ENCODE measurements at regions of chr12 and their contacts with region 1.

Region 1: GRCh38 chr12:4857472-4858291 is 52.0 kb upstream of the KCNA1 start:
- DNase-seq: peak; percentile 64
- ATAC-seq: peak; percentile 90
- H3K4me3 Mint-ChIP-seq: peak overlapping the region; percentile 73
- H3K27ac Mint-ChIP-seq: no peak overlapping the region
- H3K4me1 Mint-ChIP-seq: peaks cover 17% of the 10 kb centered on the region
- H3K27me3 Mint-ChIP-seq: peaks cover 35% of the 10 kb centered on the region
- CTCF ChIP-seq: no peak

Region 2: GRCh38 chr12:3998968-3999826 is 858.5 kb before region 1 on chr12:
- CTCF ChIA-PET with region 1: no interaction called
- POLR2A ChIA-PET with region 1: no interaction called
- intact Hi-C with region 1: no loop called
- DNase-seq: no peak
- ATAC-seq: no peak
- H3K4me3 Mint-ChIP-seq: no peak overlapping the region
- H3K27ac Mint-ChIP-seq: no peak overlapping the region
- H3K4me1 Mint-ChIP-seq: peaks cover 4% of the 10 kb centered on the region
- H3K27me3 Mint-ChIP-seq: peaks cover 6% of the 10 kb centered on the region
- CTCF ChIP-seq: no peak

Region 3: DNA sequence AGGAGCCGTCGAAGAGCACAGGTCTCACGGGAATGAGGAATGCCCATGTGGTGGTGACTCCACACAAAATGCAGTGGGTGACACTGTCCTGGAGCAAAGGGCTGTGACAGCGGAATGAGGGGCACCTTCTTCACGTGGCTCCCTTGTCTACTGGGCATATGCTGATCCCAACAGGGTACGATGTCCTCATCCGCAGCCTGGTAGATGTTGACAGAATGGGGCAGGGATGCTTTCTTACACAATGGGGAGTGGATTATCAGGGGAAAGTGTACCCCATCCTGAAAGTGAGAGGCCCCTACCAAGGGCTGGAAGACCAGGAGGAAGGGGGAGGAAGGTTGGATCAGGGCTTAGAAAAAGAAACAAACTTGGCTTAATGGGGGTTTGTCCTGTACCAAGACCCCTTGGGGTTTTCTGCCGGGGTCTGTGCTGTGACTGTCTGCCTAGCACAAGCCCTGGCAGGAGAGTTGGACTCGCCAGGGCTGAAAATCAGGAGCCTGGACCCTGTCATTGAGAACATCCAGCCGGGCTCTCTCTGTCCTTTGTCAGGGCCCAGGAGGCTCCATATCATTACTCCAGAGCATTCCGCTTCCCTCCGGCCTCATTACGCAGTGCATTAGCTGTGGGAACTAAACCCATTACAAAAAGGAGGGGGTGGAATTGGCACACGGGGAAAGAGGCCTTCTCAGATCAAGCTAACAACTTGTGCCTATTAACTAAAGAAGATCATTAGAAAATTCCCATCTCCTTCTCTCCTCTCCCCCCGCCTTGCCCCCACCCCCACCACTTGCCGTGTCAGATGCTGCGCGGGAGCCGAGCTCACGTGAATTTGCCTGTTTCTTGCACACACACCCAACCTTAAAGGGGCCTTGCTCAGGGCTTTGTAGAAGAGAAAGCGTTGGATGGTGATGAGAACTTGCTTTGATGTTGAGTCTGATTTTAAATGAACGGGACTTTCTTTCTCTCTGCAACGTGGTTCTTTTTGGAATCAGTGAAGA is 812.6 kb before region 1 on chr12:
- CTCF ChIA-PET with region 1: no interaction called
- POLR2A ChIA-PET with region 1: no interaction called
- intact Hi-C with region 1: no loop called
- DNase-seq: no peak
- ATAC-seq: no peak
- H3K4me3 Mint-ChIP-seq: no peak overlapping the region
- H3K27ac Mint-ChIP-seq: no peak overlapping the region
- H3K4me1 Mint-ChIP-seq: no peaks in the 10 kb centered on the region
- H3K27me3 Mint-ChIP-seq: peaks cover 14% of the 10 kb centered on the region
- CTCF ChIP-seq: no peak

Region 4: GRCh38 chr12:4829161-4829792 is 28.4 kb before region 1 on chr12:
- CTCF ChIA-PET with region 1: interaction called, 14 read pairs
- POLR2A ChIA-PET with region 1: no interaction called
- intact Hi-C with region 1: loop called (anchors 1 kb)
- DNase-seq: no peak
- ATAC-seq: peak; percentile 87
- H3K4me3 Mint-ChIP-seq: peak overlapping the region; percentile 76
- H3K27ac Mint-ChIP-seq: peak overlapping the region; percentile 93
- H3K4me1 Mint-ChIP-seq: peaks cover 87% of the 10 kb centered on the region
- H3K27me3 Mint-ChIP-seq: no peaks in the 10 kb centered on the region
- CTCF ChIP-seq: no peak

Region 5: DNA sequence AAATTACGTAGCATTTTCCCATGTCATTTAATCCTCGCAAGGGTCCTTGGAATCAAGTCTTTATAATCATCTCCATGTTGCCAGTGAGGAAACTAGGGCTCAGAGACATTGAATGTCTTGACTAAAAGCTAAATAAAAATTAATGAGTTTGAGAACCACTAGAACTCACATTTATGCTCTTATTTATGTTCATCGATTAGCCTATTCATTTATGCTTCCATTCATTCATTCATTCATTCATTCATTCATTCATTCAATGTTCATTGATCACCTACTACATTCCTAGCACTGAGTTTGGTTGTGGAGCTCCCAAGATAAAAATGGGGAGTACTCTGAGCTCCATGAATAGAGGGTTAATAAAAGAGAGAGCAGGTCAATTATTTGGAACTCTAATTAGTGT is 111.7 kb after region 1 on chr12:
- CTCF ChIA-PET with region 1: no interaction called
- POLR2A ChIA-PET with region 1: no interaction called
- intact Hi-C with region 1: no loop called
- DNase-seq: no peak
- ATAC-seq: no peak
- H3K4me3 Mint-ChIP-seq: no peak overlapping the region
- H3K27ac Mint-ChIP-seq: no peak overlapping the region
- H3K4me1 Mint-ChIP-seq: no peaks in the 10 kb centered on the region
- H3K27me3 Mint-ChIP-seq: peaks cover 28% of the 10 kb centered on the region
- CTCF ChIP-seq: no peak

Region 6: DNA sequence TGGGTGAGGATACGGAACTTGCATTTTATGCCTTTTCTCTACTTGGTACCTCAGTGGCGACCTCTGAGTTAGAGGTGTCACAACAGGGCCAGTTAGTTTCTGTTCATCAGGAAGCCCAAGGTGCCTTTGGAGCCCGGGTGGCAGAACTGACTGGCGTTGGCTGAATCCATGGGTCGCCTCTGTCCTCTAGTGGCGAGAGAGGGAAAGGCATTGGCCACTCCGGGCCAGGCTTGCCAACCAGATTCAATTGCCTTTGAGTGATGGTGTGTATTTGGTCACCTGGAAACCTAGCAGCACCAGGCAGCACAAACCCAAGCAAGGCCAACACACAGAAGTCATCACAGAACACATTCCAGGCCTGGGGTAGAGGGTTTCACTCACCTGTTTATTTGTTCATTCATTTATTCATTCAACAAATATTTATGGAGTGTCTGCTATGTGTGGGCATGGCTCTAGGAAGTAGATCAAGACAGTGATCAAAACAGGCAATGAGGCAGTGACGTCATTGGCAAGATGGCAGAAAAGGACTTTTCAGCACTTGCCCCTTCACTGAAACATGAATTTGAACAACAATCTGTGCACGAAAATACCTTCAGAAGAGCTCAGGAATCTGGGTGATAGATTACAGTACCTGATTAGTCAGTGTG is 145.5 kb after region 1 on chr12:
- CTCF ChIA-PET with region 1: interaction called, 21 read pairs
- POLR2A ChIA-PET with region 1: no interaction called
- intact Hi-C with region 1: loop called (anchors 1 kb)
- DNase-seq: peak; percentile 36
- ATAC-seq: peak; percentile 83
- H3K4me3 Mint-ChIP-seq: no peak overlapping the region
- H3K27ac Mint-ChIP-seq: no peak overlapping the region
- H3K4me1 Mint-ChIP-seq: no peaks in the 10 kb centered on the region
- H3K27me3 Mint-ChIP-seq: peaks cover 15% of the 10 kb centered on the region
- CTCF ChIP-seq: peak; percentile 56

Region 7: GRCh38 chr12:5083955-5084849 is 226.5 kb after region 1 on chr12:
- CTCF ChIA-PET with region 1: interaction called, 20 read pairs
- POLR2A ChIA-PET with region 1: no interaction called
- intact Hi-C with region 1: loop called (anchors 1 kb)
- DNase-seq: no peak
- ATAC-seq: peak; percentile 57
- H3K4me3 Mint-ChIP-seq: no peak overlapping the region
- H3K27ac Mint-ChIP-seq: no peak overlapping the region
- H3K4me1 Mint-ChIP-seq: no peaks in the 10 kb centered on the region
- H3K27me3 Mint-ChIP-seq: no peaks in the 10 kb centered on the region
- CTCF ChIP-seq: no peak